ENCODE measurements at regions of chr11 and their contacts with region 1.

Region 1: GRCh38 chr11:73965076-73965860 is 14.4 kb downstream of the DNAJB13 start:
- DNase-seq: peak in 1 of 6 donors; percentile 35
- ATAC-seq: no peak
- H3K4me3 ChIP-seq: no peak overlapping the region
- H3K27ac ChIP-seq: no peak overlapping the region
- H3K4me1 ChIP-seq: no peaks in the 10 kb centered on the region
- H3K27me3 ChIP-seq: no peaks in the 10 kb centered on the region
- CTCF ChIP-seq: no peak

Region 2: GRCh38 chr11:74037309-74037708 is 72.0 kb after region 1 on chr11:
- intact Hi-C with region 1: no loop called
- DNase-seq: no peak
- ATAC-seq: peak in 1 of 4 donors; percentile 19
- H3K4me3 ChIP-seq: no peak overlapping the region
- H3K27ac ChIP-seq: no peak overlapping the region
- H3K4me1 ChIP-seq: no peaks in the 10 kb centered on the region
- H3K27me3 ChIP-seq: no peaks in the 10 kb centered on the region
- CTCF ChIP-seq: no peak

Region 3: DNA sequence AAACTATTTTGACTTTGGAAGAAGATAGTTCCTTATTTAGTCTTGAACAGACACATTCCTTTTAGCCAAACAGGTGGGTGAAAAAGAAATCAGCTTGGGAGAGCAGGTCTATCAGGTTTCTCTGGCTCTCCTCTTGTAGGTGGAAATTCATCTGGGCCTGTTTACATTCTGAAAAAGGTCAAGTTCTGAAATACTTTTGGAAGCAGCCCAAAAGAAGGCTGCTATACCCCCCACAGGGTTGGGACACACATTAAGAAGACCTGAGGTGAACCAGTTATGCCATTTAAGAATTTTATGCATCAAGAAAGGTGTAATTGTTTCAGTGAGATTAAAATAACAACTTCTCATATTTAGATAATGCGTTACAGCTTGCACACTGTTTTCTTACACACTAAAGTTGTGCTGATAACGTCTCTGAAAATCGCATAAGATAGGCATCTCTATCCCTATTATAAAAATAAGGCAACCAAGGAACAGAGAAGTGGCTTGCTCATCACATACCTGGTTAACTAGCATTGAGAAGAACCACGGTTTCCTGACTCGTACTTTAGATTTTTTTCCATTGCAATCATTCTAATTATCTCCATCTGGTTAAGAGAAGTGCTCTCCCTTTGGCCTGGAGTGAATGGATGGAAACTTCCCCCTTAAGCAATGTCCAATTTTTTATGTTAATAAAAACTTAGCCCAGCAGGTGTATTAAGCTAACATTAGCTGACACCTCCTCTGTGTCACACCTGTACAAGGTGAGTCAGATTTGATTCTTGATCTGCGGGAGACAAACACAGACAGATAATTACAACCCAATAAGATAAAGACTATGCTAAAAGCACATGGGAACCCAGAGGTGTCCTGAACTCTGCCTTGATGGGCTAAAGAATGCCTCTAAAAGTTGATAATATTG is 104.1 kb after region 1 on chr11:
- intact Hi-C with region 1: loop called in 1 of 3 experiments (anchors 10 kb)
- DNase-seq: peak in 3 of 6 donors; percentile 27 to 37 (median 32)
- ATAC-seq: peak; percentile 58 to 83 (median 82)
- H3K4me3 ChIP-seq: no peak overlapping the region
- H3K27ac ChIP-seq: peak overlapping the region; percentile 34 to 76 (median 51)
- H3K4me1 ChIP-seq: peaks cover 26 to 38% (median 29%) of the 10 kb centered on the region in 3 donors
- H3K27me3 ChIP-seq: no peaks in the 10 kb centered on the region
- CTCF ChIP-seq: no peak

Measured in pancreas (tissue), 10 donors.